HepG2 (cell line): ENCODE measurements at regions of chr22 and their contacts with region 1.

Region 1: DNA sequence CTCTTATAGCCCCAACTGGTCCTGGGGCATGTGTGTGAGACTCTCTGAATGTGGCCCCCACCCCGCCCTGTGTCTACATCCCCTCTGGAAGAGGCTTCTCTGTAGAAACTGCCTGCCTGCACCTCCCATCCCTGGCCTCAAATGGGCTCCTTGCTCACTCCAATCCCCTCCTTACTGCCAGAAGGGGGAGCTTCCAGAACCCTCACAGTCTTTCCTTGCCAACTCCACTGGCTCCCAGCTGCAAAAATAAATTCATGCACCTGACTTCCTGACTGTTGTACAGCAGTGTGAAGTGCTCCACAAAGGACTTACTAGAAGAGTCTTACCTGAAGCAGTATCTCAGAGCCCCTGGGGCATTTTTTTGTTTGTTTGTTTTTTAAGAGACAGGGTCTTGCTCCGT is 15.2 kb upstream of the SERPIND1 start:
- DNase-seq: peak; percentile 56
- ATAC-seq: peak; percentile 95
- H3K4me3 ChIP-seq: no peak overlapping the region
- H3K27ac ChIP-seq: peak overlapping the region; percentile 33
- H3K4me1 ChIP-seq: peaks cover 8% of the 10 kb centered on the region
- H3K27me3 ChIP-seq: no peaks in the 10 kb centered on the region
- CTCF ChIP-seq: peak; percentile 69
- EP300 ChIP-seq: no peak
- POLR2A ChIP-seq: no peak
- RAD21 ChIP-seq: peak; percentile 47; the same call in 1 of the 2 replicates

Region 2: DNA sequence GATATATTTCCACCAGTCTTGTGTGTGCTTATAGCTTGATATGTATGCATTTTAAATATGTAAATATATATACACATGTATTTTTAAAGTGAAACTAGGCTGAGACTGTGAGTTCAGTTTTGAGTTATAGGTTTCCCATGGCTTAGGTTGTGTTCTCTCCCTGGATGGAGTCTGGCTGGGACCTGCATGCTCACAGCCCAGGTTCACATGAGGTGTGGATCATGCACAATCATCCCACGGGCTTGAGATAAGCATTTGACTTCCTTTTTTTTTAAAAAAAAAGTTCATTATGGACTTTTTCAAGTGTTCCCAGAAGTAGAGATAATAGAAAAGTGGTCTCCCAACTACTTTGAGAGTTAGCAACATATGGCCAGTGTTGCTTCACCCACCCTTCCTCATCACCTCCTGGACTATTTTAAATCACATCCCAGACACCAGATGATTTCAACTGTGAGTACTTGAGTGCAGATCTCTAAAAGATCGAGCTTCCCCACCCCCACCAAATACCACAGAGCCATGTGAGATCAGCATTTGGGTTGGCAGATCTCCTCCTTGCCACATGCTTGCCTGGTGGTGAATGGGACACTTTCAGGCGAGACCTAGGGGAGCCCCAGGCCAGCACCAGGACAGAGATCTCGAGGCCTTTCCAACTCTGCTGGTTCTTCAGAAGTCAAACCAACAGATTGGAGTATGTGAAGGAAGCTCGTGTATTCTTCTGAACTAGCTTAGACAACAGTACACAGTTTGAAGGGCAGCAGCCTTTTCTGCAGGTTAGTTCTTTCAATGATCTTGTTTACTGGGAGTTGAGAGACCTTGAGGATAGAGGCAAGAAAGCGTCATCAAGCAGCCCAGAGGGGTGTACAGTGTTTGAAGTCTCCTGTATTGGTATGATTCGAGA is 235.4 kb before region 1 on chr22:
- CTCF ChIA-PET with region 1: no interaction called
- POLR2A ChIA-PET with region 1: no interaction called
- in situ Hi-C with region 1: no loop called
- intact Hi-C with region 1: no loop called
- DNase-seq: no peak
- ATAC-seq: peak; percentile 33; the same call in 2 of the 3 replicates
- H3K4me3 ChIP-seq: 0 out of 6 replicates have a peak overlapping the region, but pooled peaks of 1 of the 3 experiments have one; percentile 6
- H3K27ac ChIP-seq: peak overlapping the region; percentile 63
- H3K4me1 ChIP-seq: peaks cover 37% of the 10 kb centered on the region
- H3K27me3 ChIP-seq: no peaks in the 10 kb centered on the region
- CTCF ChIP-seq: no peak
- EP300 ChIP-seq: no peak
- POLR2A ChIP-seq: no peak
- RAD21 ChIP-seq: no peak

Region 3: DNA sequence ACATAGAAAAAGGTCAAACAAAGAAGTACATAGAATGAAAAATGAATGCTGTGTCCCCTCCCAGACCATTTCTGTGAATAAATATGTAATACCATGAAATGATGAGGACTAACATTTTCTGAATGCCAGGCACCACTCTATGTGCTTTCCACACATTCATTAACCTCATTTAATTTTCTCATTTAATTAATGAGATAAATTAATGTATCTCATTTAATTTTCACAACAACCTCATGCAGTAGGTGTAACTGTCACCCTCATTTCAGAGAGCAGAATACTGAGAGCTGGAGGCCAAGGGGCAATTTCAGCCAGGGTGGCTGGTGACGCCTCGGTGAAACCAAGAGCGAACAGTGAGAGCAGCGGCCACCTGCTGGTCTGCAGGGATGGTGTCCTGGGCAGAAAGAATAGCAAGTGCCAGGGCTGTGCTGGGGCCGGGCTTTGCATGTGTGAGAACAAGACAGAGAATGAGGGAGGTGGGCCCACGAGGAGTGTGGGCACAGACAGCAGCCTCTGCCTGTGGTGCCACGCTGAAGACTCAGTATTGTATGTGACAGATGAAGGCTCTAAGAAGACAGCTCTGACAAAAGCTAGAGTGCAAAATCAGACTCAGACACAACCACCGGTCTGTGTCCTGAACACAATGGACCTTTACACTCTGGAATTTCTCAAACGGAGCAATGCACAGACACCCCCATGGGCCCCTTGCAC is 13.4 kb after region 1 on chr22:
- CTCF ChIA-PET with region 1: interaction called, 3 read pairs
- POLR2A ChIA-PET with region 1: interaction called, 11 read pairs
- in situ Hi-C with region 1: no loop called
- intact Hi-C with region 1: loop called (anchors 1 kb)
- DNase-seq: peak; percentile 70
- ATAC-seq: peak; percentile 85
- H3K4me3 ChIP-seq: peak overlapping the region in 1 of 3 experiments; percentile 36; a peak in 1 of 6 replicates
- H3K27ac ChIP-seq: peak overlapping the region; percentile 90
- H3K4me1 ChIP-seq: peaks cover 48% of the 10 kb centered on the region
- H3K27me3 ChIP-seq: no peaks in the 10 kb centered on the region; a peak in 1 of 5 replicates
- CTCF ChIP-seq: peak; percentile 85
- EP300 ChIP-seq: peak in 1 of 2 experiments; percentile 22; a peak in 1 of 4 replicates
- POLR2A ChIP-seq: no peak
- RAD21 ChIP-seq: peak; percentile 75

Region 4: GRCh38 chr22:20783844-20784723 is 25.4 kb after region 1 on chr22:
- CTCF ChIA-PET with region 1: interaction called, 18 read pairs
- POLR2A ChIA-PET with region 1: no interaction called
- in situ Hi-C with region 1: no loop called
- intact Hi-C with region 1: loop called (anchors 1 kb)
- DNase-seq: peak; percentile 70
- ATAC-seq: peak; percentile 49
- H3K4me3 ChIP-seq: no peak overlapping the region
- H3K27ac ChIP-seq: no peak overlapping the region
- H3K4me1 ChIP-seq: peaks cover 69% of the 10 kb centered on the region
- H3K27me3 ChIP-seq: no peaks in the 10 kb centered on the region
- CTCF ChIP-seq: peak; percentile 70
- EP300 ChIP-seq: no peak
- POLR2A ChIP-seq: no peak
- RAD21 ChIP-seq: peak; percentile 52; the same call in 1 of the 2 replicates

Region 5: GRCh38 chr22:20989323-20990138 is 230.8 kb after region 1 on chr22:
- CTCF ChIA-PET with region 1: no interaction called
- POLR2A ChIA-PET with region 1: no interaction called
- in situ Hi-C with region 1: no loop called
- intact Hi-C with region 1: no loop called
- DNase-seq: no peak
- ATAC-seq: no peak
- H3K4me3 ChIP-seq: no peak overlapping the region
- H3K27ac ChIP-seq: no peak overlapping the region
- H3K4me1 ChIP-seq: no peaks in the 10 kb centered on the region
- H3K27me3 ChIP-seq: no peaks in the 10 kb centered on the region
- CTCF ChIP-seq: no peak
- EP300 ChIP-seq: no peak
- POLR2A ChIP-seq: no peak
- RAD21 ChIP-seq: no peak